PC-9 (cell line): ENCODE measurements at regions of chr11 and their contacts with region 1.

Region 1: DNA sequence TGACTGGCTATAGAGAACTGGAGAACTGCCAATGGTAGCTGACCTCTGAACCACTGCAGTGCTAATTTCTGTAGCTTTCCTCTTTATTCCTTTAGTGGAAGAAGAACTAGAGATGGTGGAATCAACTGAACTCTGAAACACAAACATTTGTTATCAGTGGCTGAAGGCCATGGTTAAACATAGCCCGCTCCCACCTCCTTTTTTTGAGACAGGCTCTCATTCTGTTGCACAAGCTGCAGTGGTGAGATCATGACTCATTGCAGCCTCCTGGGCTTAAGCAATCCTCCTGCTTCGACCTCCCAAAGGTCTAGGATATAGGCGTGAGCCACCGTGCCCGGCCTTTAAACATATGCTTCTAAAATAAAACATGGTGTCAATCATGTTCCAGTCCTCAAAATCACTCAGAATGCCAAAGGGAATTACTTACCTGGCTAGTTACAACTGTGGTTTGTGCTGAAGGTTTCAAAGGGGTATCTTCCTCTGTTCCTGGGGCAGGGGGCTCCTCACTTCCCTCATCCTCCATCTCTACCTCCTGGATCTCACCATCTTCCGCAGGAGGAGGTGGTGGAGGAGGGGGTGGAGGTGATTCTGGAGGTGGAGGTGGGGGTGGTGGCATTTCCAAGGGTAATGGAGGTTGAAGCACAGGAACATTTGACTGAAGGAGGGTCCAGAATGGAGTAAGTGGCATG is 9.0 kb upstream of the AGBL2 start:
- DNase-seq: peak in 1 of 2 experiments; percentile 68
- H3K4me3 ChIP-seq: no peak overlapping the region
- H3K27ac ChIP-seq: no peak overlapping the region
- H3K4me1 ChIP-seq: no peaks in the 10 kb centered on the region
- H3K27me3 ChIP-seq: no peaks in the 10 kb centered on the region
- CTCF ChIP-seq: no peak

Region 2: DNA sequence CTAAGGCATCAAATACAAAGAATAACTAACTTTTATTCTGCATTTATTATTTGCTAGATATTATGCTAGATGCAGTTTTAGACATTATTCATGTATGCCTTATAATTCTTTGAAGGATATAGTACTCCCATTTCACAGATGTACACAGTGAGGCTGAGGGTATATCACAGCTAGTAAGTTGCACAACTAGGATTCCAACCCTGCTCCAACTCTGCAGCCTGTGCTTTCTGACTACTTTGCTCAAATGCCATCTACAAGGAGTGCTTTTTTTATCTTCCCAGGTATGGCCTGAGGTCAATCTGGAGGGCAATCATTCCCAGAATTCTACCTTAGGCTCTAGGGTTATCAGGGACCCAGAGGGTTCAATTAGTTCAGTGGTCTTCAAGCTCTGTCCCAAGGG is 95.6 kb after region 1 on chr11:
- CTCF ChIA-PET with region 1: no interaction called
- POLR2A ChIA-PET with region 1: no interaction called
- intact Hi-C with region 1: loop called (anchors 10 kb)
- DNase-seq: no peak
- H3K4me3 ChIP-seq: no peak overlapping the region
- H3K27ac ChIP-seq: no peak overlapping the region
- H3K4me1 ChIP-seq: no peaks in the 10 kb centered on the region
- H3K27me3 ChIP-seq: no peaks in the 10 kb centered on the region
- CTCF ChIP-seq: no peak